PC-3 (cell line): ENCODE measurements at regions of chr1 and their contacts with region 1.

Region 1: GRCh38 chr1:198657550-198658064 is 18.8 kb downstream of the PTPRC start:
- DNase-seq: peak; percentile 97
- ATAC-seq: peak; percentile 85
- H3K4me3 ChIP-seq: peak overlapping the region; percentile 20; the same call in 1 of the 2 replicates
- H3K27ac ChIP-seq: peak overlapping the region; percentile 99
- H3K4me1 ChIP-seq: peaks cover 35% of the 10 kb centered on the region
- H3K27me3 ChIP-seq: no peaks in the 10 kb centered on the region
- CTCF ChIP-seq: no peak

Region 2: DNA sequence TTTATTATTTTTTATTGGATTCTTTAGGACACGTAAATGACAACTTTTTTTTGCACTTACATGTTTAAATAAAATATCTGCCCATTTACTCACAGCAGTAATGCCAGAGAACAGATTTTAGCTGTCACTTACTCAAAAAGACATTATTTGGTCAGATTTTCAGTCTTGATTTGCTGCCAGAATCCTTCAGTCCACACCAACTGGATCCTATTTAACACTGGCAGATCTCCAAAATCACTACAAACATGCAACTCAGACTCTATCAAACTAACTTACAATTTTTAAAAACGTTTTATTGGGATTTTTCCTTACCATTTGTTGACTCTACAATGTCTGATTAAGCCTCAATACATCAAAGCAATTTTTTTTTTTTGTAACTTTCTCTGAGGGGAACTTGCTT is 128.2 kb before region 1 on chr1:
- CTCF ChIA-PET with region 1: no interaction called
- POLR2A ChIA-PET with region 1: no interaction called
- intact Hi-C with region 1: loop called (anchors 5 kb)
- DNase-seq: peak; percentile 78
- ATAC-seq: peak; percentile 57
- H3K4me3 ChIP-seq: no peak overlapping the region
- H3K27ac ChIP-seq: peak overlapping the region; percentile 49
- H3K4me1 ChIP-seq: peaks cover 24% of the 10 kb centered on the region
- H3K27me3 ChIP-seq: no peaks in the 10 kb centered on the region
- CTCF ChIP-seq: no peak

Region 3: GRCh38 chr1:198575798-198576641 is 81.6 kb before region 1 on chr1:
- CTCF ChIA-PET with region 1: no interaction called
- POLR2A ChIA-PET with region 1: no interaction called
- intact Hi-C with region 1: loop called (anchors 1 kb)
- DNase-seq: peak; percentile 79
- ATAC-seq: peak; percentile 76
- H3K4me3 ChIP-seq: no peak overlapping the region
- H3K27ac ChIP-seq: peak overlapping the region; percentile 69
- H3K4me1 ChIP-seq: peaks cover 22% of the 10 kb centered on the region
- H3K27me3 ChIP-seq: no peaks in the 10 kb centered on the region
- CTCF ChIP-seq: no peak

Region 4: GRCh38 chr1:198669023-198669698 is 11.6 kb after region 1 on chr1:
- CTCF ChIA-PET with region 1: no interaction called
- POLR2A ChIA-PET with region 1: interaction called, 6 read pairs
- intact Hi-C with region 1: loop called (anchors 1 kb)
- DNase-seq: peak; percentile 88
- ATAC-seq: peak; percentile 89
- H3K4me3 ChIP-seq: no peak overlapping the region
- H3K27ac ChIP-seq: peak overlapping the region; percentile 98
- H3K4me1 ChIP-seq: peaks cover 63% of the 10 kb centered on the region
- H3K27me3 ChIP-seq: no peaks in the 10 kb centered on the region
- CTCF ChIP-seq: no peak

Region 5: GRCh38 chr1:198880818-198881597 is 223.4 kb after region 1 on chr1:
- CTCF ChIA-PET with region 1: no interaction called
- POLR2A ChIA-PET with region 1: no interaction called
- intact Hi-C with region 1: no loop called
- DNase-seq: peak; percentile 82
- ATAC-seq: peak; percentile 95
- H3K4me3 ChIP-seq: no peak overlapping the region
- H3K27ac ChIP-seq: peak overlapping the region; percentile 79
- H3K4me1 ChIP-seq: peaks cover 13% of the 10 kb centered on the region
- H3K27me3 ChIP-seq: no peaks in the 10 kb centered on the region
- CTCF ChIP-seq: no peak